A549 (cell line): ENCODE measurements at regions of chr1 and their contacts with region 1.

Region 1: DNA sequence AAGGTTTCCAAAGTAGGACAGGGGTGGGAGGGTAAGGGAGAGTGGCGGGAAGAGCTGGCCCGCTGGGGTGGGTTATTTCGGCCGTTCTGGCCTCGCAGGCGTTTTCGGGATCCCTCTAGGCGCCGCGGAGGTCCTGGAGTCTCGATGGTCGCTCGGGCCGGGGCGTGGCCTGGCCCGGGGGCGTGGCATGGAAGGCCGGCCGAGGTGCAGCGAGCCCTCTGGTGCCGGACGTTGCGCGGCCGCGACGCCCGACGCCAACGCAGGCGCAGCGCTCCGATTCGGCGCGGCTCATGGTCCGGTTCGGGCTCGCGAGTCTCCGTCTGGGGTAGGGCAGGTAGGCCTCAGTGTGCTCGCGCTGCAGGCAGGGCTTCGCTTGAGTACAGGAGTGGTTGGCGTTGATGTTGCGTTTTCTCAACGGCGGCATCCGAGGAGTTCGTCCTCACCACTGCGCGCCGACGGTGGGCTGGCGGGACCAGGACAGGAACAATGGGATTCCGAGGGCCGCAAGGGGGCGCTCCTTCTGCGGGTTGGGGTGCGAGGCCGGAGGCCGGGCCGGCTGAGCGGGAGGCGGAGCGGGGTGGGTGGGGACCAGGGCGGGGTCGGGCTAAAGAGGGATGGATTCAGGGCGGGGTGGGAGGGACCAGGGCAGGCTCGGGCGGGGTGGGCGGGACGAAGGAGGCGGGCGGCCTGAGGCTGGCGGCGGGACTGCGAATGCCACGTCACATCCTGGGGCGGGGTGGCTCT is at the start of gene PGBD2:
- DNase-seq: peak; percentile 79 to 96
- ATAC-seq: peak; percentile 95 to 97
- H3K4me3 ChIP-seq: peak within 1 kb of the TSS; percentile 62
- H3K27ac ChIP-seq: peak within 1 kb of the TSS; percentile 81 to 92
- H3K4me1 ChIP-seq: peaks cover 4% of the 10 kb centered on the region; the same call in 1 of the 3 replicates
- CTCF ChIP-seq: peak; percentile 83
- EP300 ChIP-seq: no peak
- POLR2A ChIP-seq: peak; percentile 98
- RAD21 ChIP-seq: peak; percentile 31 to 59
- polyA plus RNA-seq, gene PGBD2: 7.1 and 7.6 TPM in 2 replicates

Region 2: GRCh38 chr1:248825909-248826760 is 80.0 kb before region 1 on chr1 and contains the start of gene SH3BP5L:
- CTCF ChIA-PET with region 1: interaction called, 3 read pairs
- POLR2A ChIA-PET with region 1: interaction called, 15 read pairs
- DNase-seq: peak; percentile 97 to 98
- ATAC-seq: peak; percentile 91 to 96
- H3K4me3 ChIP-seq: peak within 1 kb of the TSS; percentile 84
- H3K27ac ChIP-seq: peak within 1 kb of the TSS; percentile 96 to 97
- H3K4me1 ChIP-seq: peaks cover 59% of the 10 kb centered on the region
- CTCF ChIP-seq: peak; percentile 76
- EP300 ChIP-seq: no peak
- POLR2A ChIP-seq: peak; percentile 46
- RAD21 ChIP-seq: peak; percentile 44 to 48; a peak in 4 of 5 replicates
- polyA plus RNA-seq, gene SH3BP5L: 10.9 and 12.1 TPM in 2 replicates

Region 3: GRCh38 chr1:248886237-248886895 is 19.8 kb before region 1 on chr1:
- CTCF ChIA-PET with region 1: interaction called, 11 read pairs
- POLR2A ChIA-PET with region 1: interaction called, 3 read pairs
- DNase-seq: no peak
- ATAC-seq: no peak
- H3K4me3 ChIP-seq: no peak overlapping the region
- H3K27ac ChIP-seq: no peak overlapping the region
- H3K4me1 ChIP-seq: no peaks in the 10 kb centered on the region
- CTCF ChIP-seq: no peak
- EP300 ChIP-seq: no peak
- POLR2A ChIP-seq: no peak
- RAD21 ChIP-seq: no peak